ENCODE measurements at regions of chr7 and their contacts with region 1.

Region 1: GRCh38 chr7:16431646-16432424 is 10.5 kb upstream of the CRPPA start:
- DNase-seq: peak; percentile 50 to 69
- H3K4me3 ChIP-seq: no peak overlapping the region
- H3K4me3 Mint-ChIP-seq: no peak overlapping the region
- H3K27ac Mint-ChIP-seq: no peak overlapping the region
- H3K4me1 ChIP-seq: peaks cover 13% of the 10 kb centered on the region; the same call in 1 of the 2 replicates
- H3K4me1 Mint-ChIP-seq: peaks cover 12% of the 10 kb centered on the region
- H3K27me3 ChIP-seq: no peaks in the 10 kb centered on the region
- H3K27me3 Mint-ChIP-seq: no peaks in the 10 kb centered on the region
- CTCF ChIP-seq: peak; percentile 72 to 79

Region 2: DNA sequence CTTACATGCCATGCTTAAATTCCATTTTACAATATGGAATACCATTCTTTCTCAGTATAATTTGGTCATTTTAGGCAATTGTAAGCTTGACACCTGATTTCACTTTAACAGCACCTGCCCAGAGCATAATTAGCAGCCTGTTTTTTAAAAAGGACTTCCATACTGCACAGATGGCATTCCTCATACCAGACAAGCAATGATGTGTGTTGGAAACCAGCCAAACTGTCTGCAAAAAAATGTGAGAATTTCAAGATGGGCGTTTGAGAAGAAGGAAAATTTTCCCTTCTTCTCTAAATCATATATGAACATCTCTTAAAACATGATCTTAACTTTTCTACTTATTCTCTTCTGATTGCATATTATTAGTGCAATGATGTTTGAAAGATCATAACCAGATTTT is 829.6 kb before region 1 on chr7:
- CTCF ChIA-PET with region 1: no interaction called
- POLR2A ChIA-PET with region 1: no interaction called
- intact Hi-C with region 1: no loop called
- DNase-seq: no peak
- H3K4me3 ChIP-seq: no peak overlapping the region
- H3K4me3 Mint-ChIP-seq: no peak overlapping the region
- H3K27ac Mint-ChIP-seq: no peak overlapping the region
- H3K4me1 ChIP-seq: no peaks in the 10 kb centered on the region
- H3K4me1 Mint-ChIP-seq: no peaks in the 10 kb centered on the region
- H3K27me3 ChIP-seq: no peaks in the 10 kb centered on the region
- H3K27me3 Mint-ChIP-seq: no peaks in the 10 kb centered on the region
- CTCF ChIP-seq: no peak

Region 3: DNA sequence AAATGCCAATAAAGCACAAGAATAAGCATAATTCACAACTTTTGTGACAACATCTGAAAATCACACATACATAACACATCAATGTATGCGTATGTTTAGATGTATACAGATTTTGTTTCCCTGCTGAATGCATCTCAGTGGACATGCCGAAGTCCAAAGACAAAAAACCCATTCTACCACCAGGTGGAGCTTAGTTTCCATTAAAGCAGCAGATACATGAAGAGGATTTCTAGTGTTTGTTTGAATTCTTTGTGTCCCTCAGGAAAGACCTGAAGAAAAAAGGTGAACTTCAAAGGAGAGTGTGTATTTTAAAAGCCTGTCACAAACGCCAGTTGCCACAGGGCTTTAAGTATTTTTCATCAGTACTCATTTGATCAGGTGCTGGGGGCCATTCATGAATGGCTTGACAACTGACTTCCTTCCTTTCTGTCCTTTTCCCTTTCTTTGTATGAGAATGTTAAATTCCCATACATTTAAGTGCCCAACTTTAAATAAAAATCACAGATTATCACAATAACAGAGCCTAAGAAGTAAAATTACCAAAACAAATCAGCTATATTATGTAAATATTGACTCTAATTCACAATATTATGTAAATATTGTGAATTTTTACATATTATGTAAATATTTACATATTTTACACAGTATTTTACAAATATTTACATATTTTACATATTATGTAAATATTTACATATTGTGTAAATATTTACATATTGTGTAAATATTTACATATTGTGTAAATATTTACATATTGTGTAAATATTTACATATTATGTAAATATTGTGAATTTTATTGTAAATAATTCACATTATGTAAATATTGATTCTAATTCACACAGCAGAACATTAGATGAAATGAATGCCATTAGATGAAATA is 353.5 kb before region 1 on chr7:
- CTCF ChIA-PET with region 1: no interaction called
- POLR2A ChIA-PET with region 1: no interaction called
- intact Hi-C with region 1: loop called (anchors 1 kb)
- DNase-seq: peak; percentile 43 to 79
- H3K4me3 ChIP-seq: no peak overlapping the region
- H3K4me3 Mint-ChIP-seq: no peak overlapping the region
- H3K27ac Mint-ChIP-seq: peak overlapping the region; percentile 65
- H3K4me1 ChIP-seq: peaks cover 9% of the 10 kb centered on the region
- H3K4me1 Mint-ChIP-seq: peaks cover 25% of the 10 kb centered on the region
- H3K27me3 ChIP-seq: no peaks in the 10 kb centered on the region
- H3K27me3 Mint-ChIP-seq: no peaks in the 10 kb centered on the region
- CTCF ChIP-seq: peak; percentile 63 to 64

Region 4: DNA sequence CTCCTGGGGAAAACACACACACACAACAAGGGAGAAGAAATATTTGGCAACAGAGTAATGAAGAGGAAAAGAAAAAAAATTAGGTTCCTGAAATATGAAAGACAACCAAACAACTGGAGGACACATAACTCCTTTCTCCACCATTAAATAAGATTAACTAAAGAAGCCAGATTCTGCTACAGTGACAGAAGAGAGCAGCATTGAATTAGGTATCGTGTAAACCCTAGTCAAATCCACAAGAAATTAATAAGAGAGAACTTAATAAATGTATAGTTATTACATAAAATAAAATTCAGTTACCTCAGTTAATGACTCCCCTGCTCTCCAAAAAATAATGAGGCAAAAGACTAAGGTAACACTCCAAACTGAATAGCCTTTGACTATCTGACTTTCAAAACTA is 317.2 kb before region 1 on chr7:
- CTCF ChIA-PET with region 1: no interaction called
- POLR2A ChIA-PET with region 1: no interaction called
- intact Hi-C with region 1: loop called (anchors 1 kb)
- DNase-seq: peak in 1 of 2 experiments; percentile 19
- H3K4me3 ChIP-seq: no peak overlapping the region
- H3K4me3 Mint-ChIP-seq: no peak overlapping the region
- H3K27ac Mint-ChIP-seq: peak overlapping the region; percentile 13
- H3K4me1 ChIP-seq: no peaks in the 10 kb centered on the region
- H3K4me1 Mint-ChIP-seq: peaks cover 8% of the 10 kb centered on the region
- H3K27me3 ChIP-seq: no peaks in the 10 kb centered on the region
- H3K27me3 Mint-ChIP-seq: no peaks in the 10 kb centered on the region
- CTCF ChIP-seq: peak; percentile 33 to 39

Region 5: DNA sequence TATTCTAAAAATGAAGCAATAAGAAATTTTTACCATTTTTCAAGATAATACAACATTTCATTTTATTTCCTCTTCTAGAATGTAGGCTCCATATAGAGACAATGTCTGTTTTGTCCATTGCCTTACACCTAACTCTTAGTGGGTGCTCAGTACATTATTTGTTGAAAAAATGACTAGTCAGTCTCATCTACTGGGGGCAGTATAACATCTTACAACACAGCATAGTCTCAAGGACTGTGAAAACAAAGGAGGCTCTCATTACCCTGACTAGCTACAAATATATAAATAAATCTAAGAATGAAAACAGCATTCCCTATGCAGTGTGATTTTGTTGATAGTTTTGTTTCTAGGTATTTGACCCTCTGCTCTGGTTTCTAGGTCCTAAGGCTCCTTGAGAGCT is 22.1 kb before region 1 on chr7:
- CTCF ChIA-PET with region 1: no interaction called
- POLR2A ChIA-PET with region 1: no interaction called
- intact Hi-C with region 1: no loop called
- DNase-seq: no peak
- H3K4me3 ChIP-seq: no peak overlapping the region
- H3K4me3 Mint-ChIP-seq: no peak overlapping the region
- H3K27ac Mint-ChIP-seq: no peak overlapping the region
- H3K4me1 ChIP-seq: no peaks in the 10 kb centered on the region
- H3K4me1 Mint-ChIP-seq: no peaks in the 10 kb centered on the region
- H3K27me3 ChIP-seq: no peaks in the 10 kb centered on the region
- H3K27me3 Mint-ChIP-seq: no peaks in the 10 kb centered on the region
- CTCF ChIP-seq: no peak

Region 6: DNA sequence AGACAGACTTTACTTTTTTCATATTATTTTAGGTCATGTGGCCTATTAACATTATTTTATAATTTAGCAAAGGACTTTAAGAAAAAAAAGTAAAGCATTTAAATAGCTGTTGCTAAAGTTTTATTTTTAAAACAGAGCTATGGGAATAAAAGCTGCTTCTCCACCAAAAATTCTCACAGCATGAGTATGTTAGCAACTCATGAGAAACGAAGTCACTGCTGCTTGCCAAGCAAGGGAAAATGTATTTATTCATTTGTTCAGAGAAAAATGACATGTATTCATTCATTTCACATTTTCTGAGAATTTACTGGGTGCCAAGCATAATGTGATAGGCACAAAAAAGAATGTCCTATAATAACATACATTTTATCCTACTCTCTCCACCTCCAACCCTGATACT is 99.9 kb after region 1 on chr7:
- CTCF ChIA-PET with region 1: no interaction called
- POLR2A ChIA-PET with region 1: no interaction called
- intact Hi-C with region 1: loop called (anchors 1 kb)
- DNase-seq: no peak
- H3K4me3 ChIP-seq: no peak overlapping the region
- H3K4me3 Mint-ChIP-seq: no peak overlapping the region
- H3K27ac Mint-ChIP-seq: peak overlapping the region; percentile 29
- H3K4me1 ChIP-seq: peaks cover 16% of the 10 kb centered on the region
- H3K4me1 Mint-ChIP-seq: peaks cover 25% of the 10 kb centered on the region
- H3K27me3 ChIP-seq: no peaks in the 10 kb centered on the region
- H3K27me3 Mint-ChIP-seq: no peaks in the 10 kb centered on the region
- CTCF ChIP-seq: no peak

Region 7: DNA sequence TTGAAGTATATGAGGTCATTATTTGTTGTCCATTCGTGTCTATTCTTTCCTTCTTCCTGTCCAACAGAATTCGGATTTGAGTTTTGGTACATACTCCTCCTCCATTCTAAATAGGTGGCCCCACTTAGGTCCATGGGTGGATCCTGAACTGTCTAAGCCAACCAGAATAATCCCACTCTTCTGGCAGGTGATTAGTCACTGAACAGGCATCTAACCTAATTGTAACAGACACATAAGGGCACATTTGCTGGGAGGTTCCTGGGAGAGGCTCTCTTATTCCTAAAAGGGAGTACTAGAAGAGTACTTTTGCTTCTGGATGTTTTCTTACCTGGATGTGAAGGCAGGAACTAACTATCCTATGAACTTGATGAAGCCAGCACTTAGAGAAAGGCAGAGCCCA is 111.6 kb after region 1 on chr7:
- CTCF ChIA-PET with region 1: interaction called, 6 read pairs
- POLR2A ChIA-PET with region 1: no interaction called
- intact Hi-C with region 1: loop called (anchors 1 kb)
- DNase-seq: no peak
- H3K4me3 ChIP-seq: no peak overlapping the region
- H3K4me3 Mint-ChIP-seq: no peak overlapping the region
- H3K27ac Mint-ChIP-seq: peak overlapping the region; percentile 85
- H3K4me1 ChIP-seq: peaks cover 38% of the 10 kb centered on the region
- H3K4me1 Mint-ChIP-seq: peaks cover 31% of the 10 kb centered on the region
- H3K27me3 ChIP-seq: no peaks in the 10 kb centered on the region
- H3K27me3 Mint-ChIP-seq: no peaks in the 10 kb centered on the region
- CTCF ChIP-seq: no peak

Region 8: GRCh38 chr7:16695621-16696237 is 263.9 kb after region 1 on chr7:
- CTCF ChIA-PET with region 1: no interaction called
- POLR2A ChIA-PET with region 1: no interaction called
- intact Hi-C with region 1: loop called (anchors 5 kb)
- DNase-seq: peak; percentile 54 to 67
- H3K4me3 ChIP-seq: no peak overlapping the region
- H3K4me3 Mint-ChIP-seq: no peak overlapping the region
- H3K27ac Mint-ChIP-seq: no peak overlapping the region
- H3K4me1 ChIP-seq: no peaks in the 10 kb centered on the region
- H3K4me1 Mint-ChIP-seq: no peaks in the 10 kb centered on the region
- H3K27me3 ChIP-seq: no peaks in the 10 kb centered on the region
- H3K27me3 Mint-ChIP-seq: no peaks in the 10 kb centered on the region
- CTCF ChIP-seq: peak; percentile 68 to 71

Measured in Caco-2 (cell line).